ENCODE measurements at regions of chr1 and their contacts with region 1.

Region 1: DNA sequence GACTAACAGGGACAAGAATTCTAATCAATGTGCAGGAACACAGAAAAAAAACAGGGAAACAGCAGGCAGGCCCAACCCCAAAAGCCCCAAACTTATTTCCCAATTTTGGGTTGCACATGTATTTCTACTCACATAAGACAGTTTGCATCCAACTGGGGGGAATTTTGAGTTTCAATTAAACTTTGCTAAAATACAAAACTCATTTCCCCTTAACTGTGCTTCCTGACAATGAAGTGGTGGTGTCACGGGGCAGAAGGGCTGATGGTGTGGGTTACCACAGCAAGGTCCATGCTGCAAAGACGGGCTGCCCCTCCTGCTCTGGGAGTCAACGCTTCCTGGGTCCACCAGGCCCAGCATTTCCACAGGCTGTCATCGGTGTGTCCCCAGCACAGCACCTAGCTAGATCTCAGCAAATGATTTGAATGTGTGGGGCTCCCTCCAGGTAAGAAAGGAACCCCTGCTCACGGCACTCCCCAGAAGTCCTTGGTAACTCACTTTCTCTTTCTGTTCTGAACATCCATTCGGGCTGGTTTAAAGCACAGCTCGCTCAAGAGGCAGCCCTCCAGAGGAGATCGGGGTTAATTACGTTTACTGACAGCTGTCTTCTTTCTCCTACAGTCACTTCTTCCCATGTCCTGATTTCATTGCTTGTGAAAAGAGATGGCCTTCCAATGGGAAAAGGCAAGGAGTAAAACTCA is 27.4 kb downstream of the HIVEP3 start:
- DNase-seq: peak; percentile 49 to 89 (median 53)
- H3K4me3 ChIP-seq: peak overlapping the region; percentile 48 to 88 (median 83)
- H3K4me3 Mint-ChIP-seq: peak overlapping the region; percentile 88 to 96
- H3K27ac ChIP-seq: peak overlapping the region; percentile 61 to 91
- H3K27ac Mint-ChIP-seq: peak overlapping the region; percentile 91 to 96 (median 93)
- H3K4me1 ChIP-seq: peaks cover 22 to 34% of the 10 kb centered on the region in 2 donors
- H3K4me1 Mint-ChIP-seq: peaks cover 36% of the 10 kb centered on the region
- H3K27me3 ChIP-seq: no peaks in the 10 kb centered on the region
- H3K27me3 Mint-ChIP-seq: no peaks in the 10 kb centered on the region
- CTCF ChIP-seq: peak; percentile 46

Region 2: DNA sequence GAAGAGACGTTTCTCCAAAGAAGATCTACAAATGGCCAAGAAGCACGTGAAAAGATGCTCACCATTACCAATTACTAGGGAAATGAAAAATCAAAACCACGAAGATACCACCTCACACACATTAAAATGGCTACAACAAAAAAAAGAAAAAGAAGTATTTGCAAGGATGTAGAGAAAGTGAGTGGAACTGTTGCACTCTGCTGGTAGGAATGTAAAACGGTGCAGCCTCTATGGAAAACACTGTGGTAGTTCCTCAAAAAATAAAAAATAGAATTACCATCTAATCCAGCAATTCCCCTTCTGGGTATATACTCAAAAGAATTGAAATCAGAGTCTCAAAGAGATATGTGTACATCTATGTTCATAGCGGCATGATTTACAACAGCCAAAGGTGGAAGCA is 291.4 kb before region 1 on chr1:
- intact Hi-C with region 1: no loop called
- DNase-seq: no peak
- H3K4me3 ChIP-seq: no peak overlapping the region
- H3K4me3 Mint-ChIP-seq: no peak overlapping the region
- H3K27ac ChIP-seq: no peak overlapping the region
- H3K27ac Mint-ChIP-seq: no peak overlapping the region
- H3K4me1 ChIP-seq: no peaks in the 10 kb centered on the region
- H3K4me1 Mint-ChIP-seq: peaks cover 2% of the 10 kb centered on the region
- H3K27me3 ChIP-seq: no peaks in the 10 kb centered on the region
- H3K27me3 Mint-ChIP-seq: peaks cover 0 to 3% (median 0%) of the 10 kb centered on the region in 3 donors
- CTCF ChIP-seq: no peak

Region 3: DNA sequence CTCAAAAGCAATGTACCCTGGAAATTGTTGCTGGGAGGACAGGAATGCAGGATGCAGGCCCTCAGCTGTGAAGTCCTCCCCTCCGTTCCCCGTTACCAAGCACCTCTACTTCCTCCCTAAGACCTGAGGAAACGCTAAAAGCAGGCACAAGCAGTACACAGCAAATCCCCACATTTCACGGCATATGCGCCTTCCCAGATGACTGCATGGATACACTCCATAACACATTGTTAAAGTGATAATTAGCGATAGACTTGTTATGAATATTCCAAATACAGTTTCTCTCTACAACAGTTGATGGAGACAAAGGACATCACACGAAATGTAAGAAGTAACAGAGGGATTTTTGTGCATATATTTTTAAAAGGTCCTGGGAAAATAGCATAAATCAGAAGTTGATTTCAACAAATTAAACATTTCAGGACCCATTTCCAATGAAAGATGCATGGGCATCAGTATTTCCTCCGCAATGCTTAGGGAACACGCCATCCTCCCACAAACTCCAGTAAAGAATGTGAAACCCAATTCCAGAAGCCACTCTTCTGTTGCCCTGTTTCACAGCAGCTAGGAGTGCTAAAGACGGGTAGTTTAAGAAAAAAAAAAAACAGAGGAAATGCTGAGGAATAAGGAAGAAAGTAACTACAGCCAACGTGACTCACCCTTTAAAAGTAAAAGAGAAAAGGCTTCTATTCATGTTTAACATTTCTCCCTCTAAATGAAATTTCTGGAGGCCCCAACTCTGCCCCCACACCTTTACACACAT is 48.2 kb before region 1 on chr1:
- intact Hi-C with region 1: loop called in 1 of 2 experiments (anchors 5 kb)
- DNase-seq: peak in 2 of 3 donors; percentile 20 to 33
- H3K4me3 ChIP-seq: no peak overlapping the region
- H3K4me3 Mint-ChIP-seq: no peak overlapping the region
- H3K27ac ChIP-seq: no peak overlapping the region
- H3K27ac Mint-ChIP-seq: peak overlapping the region in 1 of 7 donors; percentile 67
- H3K4me1 ChIP-seq: no peaks in the 10 kb centered on the region
- H3K4me1 Mint-ChIP-seq: peaks cover 14% of the 10 kb centered on the region
- H3K27me3 ChIP-seq: no peaks in the 10 kb centered on the region
- H3K27me3 Mint-ChIP-seq: peaks cover 0 to 3% (median 0%) of the 10 kb centered on the region in 3 donors
- CTCF ChIP-seq: no peak